ENCODE measurements at regions of chr7 and their contacts with region 1.

Region 1: GRCh38 chr7:123797673-123798527 is 47.1 kb upstream of the HYAL4 start:
- DNase-seq: peak; percentile 82
- H3K4me3 ChIP-seq: no peak overlapping the region
- H3K27ac ChIP-seq: no peak overlapping the region
- H3K4me1 ChIP-seq: peaks cover 7% of the 10 kb centered on the region
- H3K27me3 ChIP-seq: no peaks in the 10 kb centered on the region
- CTCF ChIP-seq: peak in 1 of 2 donors; percentile 31
- POLR2A ChIP-seq: no peak

Region 2: DNA sequence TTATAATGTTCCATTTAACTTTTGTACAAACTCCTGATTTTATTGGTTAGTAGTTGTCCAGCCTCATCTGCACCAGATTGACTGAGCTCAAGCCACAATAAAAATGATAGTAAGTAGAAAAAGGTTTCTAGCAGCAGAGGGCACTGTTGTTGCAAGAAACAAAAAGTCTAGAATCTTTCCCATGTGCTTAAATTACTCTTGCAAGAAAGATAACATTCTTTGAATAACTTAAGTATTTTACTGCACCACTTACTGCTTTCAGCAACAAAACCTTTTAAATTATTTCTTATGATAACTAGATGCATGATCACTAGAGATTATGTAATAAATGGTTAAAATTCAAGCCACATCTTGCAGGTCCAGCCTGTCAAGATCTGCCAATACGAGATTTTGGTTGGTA is 115.2 kb before region 1 on chr7:
- CTCF ChIA-PET with region 1: interaction called, 22 read pairs
- POLR2A ChIA-PET with region 1: no interaction called
- dilution Hi-C with region 1: no loop called
- intact Hi-C with region 1: loop called (anchors 2 kb)
- DNase-seq: peak; percentile 72
- H3K4me3 ChIP-seq: no peak overlapping the region
- H3K27ac ChIP-seq: no peak overlapping the region
- H3K4me1 ChIP-seq: no peaks in the 10 kb centered on the region
- H3K27me3 ChIP-seq: no peaks in the 10 kb centered on the region
- CTCF ChIP-seq: peak; percentile 25 to 41
- POLR2A ChIP-seq: no peak

Region 3: DNA sequence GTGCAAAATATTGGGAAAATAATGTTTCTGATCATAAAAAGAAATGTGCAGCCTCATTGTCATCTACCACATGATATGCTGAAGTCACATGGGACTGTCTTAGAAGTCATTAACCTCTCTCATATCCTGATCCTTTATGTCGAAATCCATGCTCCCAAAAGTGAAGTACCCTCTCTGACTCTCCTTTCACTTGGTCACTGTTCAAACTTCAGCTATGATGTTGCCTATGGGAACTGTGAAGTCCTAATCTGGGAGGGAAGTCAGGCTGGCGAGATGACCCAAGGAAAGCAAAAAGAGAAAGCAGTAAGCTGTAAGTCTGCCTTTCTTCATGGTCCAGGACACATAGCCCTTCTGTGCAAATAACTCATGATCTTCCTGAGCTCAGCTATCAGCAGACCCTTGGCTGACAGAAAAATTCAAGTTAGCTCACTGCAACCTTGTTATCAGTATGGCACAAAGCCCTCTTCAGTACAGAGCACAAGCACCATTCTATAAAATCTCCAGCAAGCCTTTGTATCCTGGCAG is 78.6 kb before region 1 on chr7:
- CTCF ChIA-PET with region 1: no interaction called
- POLR2A ChIA-PET with region 1: no interaction called
- dilution Hi-C with region 1: no loop called
- intact Hi-C with region 1: no loop called
- DNase-seq: no peak
- H3K4me3 ChIP-seq: no peak overlapping the region
- H3K27ac ChIP-seq: no peak overlapping the region
- H3K4me1 ChIP-seq: peaks cover 15% of the 10 kb centered on the region
- H3K27me3 ChIP-seq: no peaks in the 10 kb centered on the region
- CTCF ChIP-seq: no peak
- POLR2A ChIP-seq: no peak

Region 4: DNA sequence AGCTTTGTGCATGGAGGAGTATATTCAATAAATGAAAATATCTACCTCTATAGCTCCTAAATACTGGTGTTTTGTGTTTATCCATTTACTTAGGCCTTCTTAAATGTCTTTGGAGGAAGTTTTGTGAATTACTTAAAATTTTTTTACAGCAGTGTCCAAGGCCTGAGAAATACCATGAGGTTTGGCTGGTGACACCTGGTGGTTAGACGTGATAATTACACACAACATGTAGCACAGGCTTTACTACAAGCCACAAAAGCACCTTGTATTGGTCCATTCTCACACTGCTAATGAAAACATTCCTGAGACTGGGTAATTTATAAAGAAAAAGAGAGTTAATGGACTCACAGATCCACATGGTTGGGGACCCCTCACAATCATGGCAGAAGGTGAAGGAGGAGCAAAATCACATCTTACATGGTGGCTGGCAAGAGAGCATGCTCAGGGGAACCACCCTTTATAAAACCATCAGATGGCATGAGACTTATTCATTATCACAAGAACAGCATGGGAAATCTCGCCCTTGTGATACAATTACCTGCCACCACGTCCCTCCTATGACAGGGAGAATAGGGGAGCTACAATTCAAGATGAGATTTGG is 67.7 kb after region 1 on chr7:
- CTCF ChIA-PET with region 1: interaction called, 115 read pairs
- POLR2A ChIA-PET with region 1: no interaction called
- dilution Hi-C with region 1: no loop called
- intact Hi-C with region 1: loop called (anchors 1 kb)
- DNase-seq: peak; percentile 84
- H3K4me3 ChIP-seq: no peak overlapping the region
- H3K27ac ChIP-seq: peak overlapping the region; percentile 34
- H3K4me1 ChIP-seq: peaks cover 9% of the 10 kb centered on the region
- H3K27me3 ChIP-seq: no peaks in the 10 kb centered on the region
- CTCF ChIP-seq: peak; percentile 41 to 56
- POLR2A ChIP-seq: no peak

Region 5: GRCh38 chr7:123901044-123901443 is 103.1 kb after region 1 on chr7:
- CTCF ChIA-PET with region 1: no interaction called
- POLR2A ChIA-PET with region 1: no interaction called
- dilution Hi-C with region 1: no loop called
- intact Hi-C with region 1: no loop called
- DNase-seq: no peak
- H3K4me3 ChIP-seq: no peak overlapping the region
- H3K27ac ChIP-seq: no peak overlapping the region
- H3K4me1 ChIP-seq: no peaks in the 10 kb centered on the region
- H3K27me3 ChIP-seq: no peaks in the 10 kb centered on the region
- CTCF ChIP-seq: no peak
- POLR2A ChIP-seq: no peak

Region 6: GRCh38 chr7:123916240-123916724 is 118.4 kb after region 1 on chr7:
- CTCF ChIA-PET with region 1: interaction called, 3 read pairs
- POLR2A ChIA-PET with region 1: no interaction called
- dilution Hi-C with region 1: no loop called
- intact Hi-C with region 1: loop called (anchors 1 kb)
- DNase-seq: peak; percentile 28
- H3K4me3 ChIP-seq: no peak overlapping the region
- H3K27ac ChIP-seq: no peak overlapping the region
- H3K4me1 ChIP-seq: no peaks in the 10 kb centered on the region
- H3K27me3 ChIP-seq: peaks cover 0 to 2% of the 10 kb centered on the region in 2 experiments
- CTCF ChIP-seq: peak in 1 of 2 donors; percentile 15
- POLR2A ChIP-seq: no peak

Region 7: DNA sequence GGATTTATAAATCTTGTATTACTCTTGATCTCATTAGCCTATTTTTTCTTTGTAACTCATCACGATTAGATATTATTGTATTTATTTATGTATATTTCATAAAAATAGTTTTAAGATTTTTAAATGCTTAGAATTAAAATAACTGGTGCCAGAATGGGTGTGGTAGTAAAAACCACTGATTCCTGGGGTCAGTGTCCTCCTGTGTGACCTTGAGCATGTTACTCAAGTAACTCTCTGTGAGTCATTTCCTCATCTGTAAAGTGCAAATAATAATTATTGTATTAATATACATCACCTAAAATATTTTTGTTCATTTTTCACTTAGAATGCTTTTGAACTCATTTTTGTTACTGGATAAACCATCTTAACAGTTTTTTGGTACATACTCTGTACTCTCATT is 326.3 kb after region 1 on chr7:
- CTCF ChIA-PET with region 1: no interaction called
- POLR2A ChIA-PET with region 1: no interaction called
- dilution Hi-C with region 1: no loop called
- intact Hi-C with region 1: loop called (anchors 10 kb)
- DNase-seq: peak; percentile 55
- H3K4me3 ChIP-seq: no peak overlapping the region
- H3K27ac ChIP-seq: no peak overlapping the region
- H3K4me1 ChIP-seq: peaks cover 9% of the 10 kb centered on the region
- H3K27me3 ChIP-seq: no peaks in the 10 kb centered on the region
- CTCF ChIP-seq: no peak
- POLR2A ChIP-seq: no peak

Region 8: GRCh38 chr7:124856299-124856888 is 1058.5 kb after region 1 on chr7:
- CTCF ChIA-PET with region 1: no interaction called
- POLR2A ChIA-PET with region 1: no interaction called
- dilution Hi-C with region 1: no loop called
- intact Hi-C with region 1: loop called (anchors 5 kb)
- DNase-seq: peak; percentile 61
- H3K4me3 ChIP-seq: no peak overlapping the region
- H3K27ac ChIP-seq: no peak overlapping the region
- H3K4me1 ChIP-seq: no peaks in the 10 kb centered on the region
- H3K27me3 ChIP-seq: no peaks in the 10 kb centered on the region
- CTCF ChIP-seq: peak; percentile 31 to 44
- POLR2A ChIP-seq: no peak